Activated CD4-positive, alpha-beta memory T cell treated with anti-CD3 and anti-CD28 coated beads, Interleukin-2, amount 10 ng/mL, durations not matched to agents 7 days and 5 days (primary cell): ENCODE measurements at regions of chr3 and their contacts with region 1.

Region 1: GRCh38 chr3:119676771-119677640 is at the start of gene COX17:
- DNase-seq: peak; percentile 97
- H3K4me3 Mint-ChIP-seq: peak within 1 kb of the TSS; percentile 74
- H3K27ac Mint-ChIP-seq: peak within 1 kb of the TSS; percentile 92
- H3K4me1 Mint-ChIP-seq: peaks cover 29% of the 10 kb centered on the region
- H3K27me3 Mint-ChIP-seq: no peaks in the 10 kb centered on the region
- total RNA-seq, gene COX17: 63.7 to 69.8 TPM

Region 2: GRCh38 chr3:119279101-119279554 is 397.9 kb before region 1 on chr3:
- CTCF ChIA-PET with region 1: interaction called, 11 read pairs
- POLR2A ChIA-PET with region 1: no interaction called
- DNase-seq: no peak
- H3K4me3 Mint-ChIP-seq: no peak overlapping the region
- H3K27ac Mint-ChIP-seq: no peak overlapping the region
- H3K4me1 Mint-ChIP-seq: no peaks in the 10 kb centered on the region
- H3K27me3 Mint-ChIP-seq: peaks cover 5% of the 10 kb centered on the region

Region 3: DNA sequence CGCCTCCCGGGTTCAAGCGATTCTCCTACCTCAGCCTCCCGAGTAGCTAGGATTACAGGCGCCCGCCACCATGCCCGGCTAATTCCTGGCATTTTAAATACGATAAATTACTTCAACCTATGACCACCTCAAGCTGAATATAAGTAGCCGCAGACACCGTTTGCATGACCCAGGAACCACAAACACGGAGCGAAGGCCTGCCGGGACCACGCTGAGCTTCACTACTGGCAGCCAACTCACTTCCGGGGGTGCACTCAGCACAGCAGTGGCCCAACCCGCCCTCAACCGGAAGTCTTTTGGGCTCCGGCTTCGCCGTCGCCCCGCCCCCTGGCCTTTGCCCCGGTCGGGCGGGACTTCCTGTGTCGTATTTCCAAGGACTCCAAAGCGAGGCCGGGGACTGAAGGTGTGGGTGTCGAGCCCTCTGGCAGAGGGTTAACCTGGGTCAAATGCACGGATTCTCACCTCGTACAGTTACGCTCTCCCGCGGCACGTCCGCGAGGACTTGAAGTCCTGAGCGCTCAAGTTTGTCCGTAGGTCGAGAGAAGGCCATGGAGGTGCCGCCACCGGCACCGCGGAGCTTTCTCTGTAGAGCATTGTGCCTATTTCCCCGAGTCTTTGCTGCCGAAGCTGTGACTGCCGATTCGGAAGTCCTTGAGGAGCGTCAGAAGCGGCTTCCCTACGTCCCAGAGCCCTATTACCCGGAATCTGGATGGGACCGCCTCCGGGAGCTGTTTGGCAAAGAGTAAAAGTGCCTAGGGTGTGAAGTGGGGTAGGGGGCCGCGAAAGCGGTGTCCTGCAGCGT is 178.6 kb before region 1 on chr3 and contains the start of gene TIMMDC1:
- CTCF ChIA-PET with region 1: interaction called, 7 read pairs
- POLR2A ChIA-PET with region 1: interaction called, 29 read pairs
- DNase-seq: peak; percentile 98
- H3K4me3 Mint-ChIP-seq: peak within 1 kb of the TSS; percentile 99
- H3K27ac Mint-ChIP-seq: peak within 1 kb of the TSS; percentile 96
- H3K4me1 Mint-ChIP-seq: peaks cover 45% of the 10 kb centered on the region
- H3K27me3 Mint-ChIP-seq: no peaks in the 10 kb centered on the region
- total RNA-seq, gene TIMMDC1: 66.4 to 67.4 TPM

Region 4: GRCh38 chr3:119524931-119525662 is 151.9 kb before region 1 on chr3:
- CTCF ChIA-PET with region 1: no interaction called
- POLR2A ChIA-PET with region 1: no interaction called
- DNase-seq: no peak
- H3K4me3 Mint-ChIP-seq: no peak overlapping the region
- H3K27ac Mint-ChIP-seq: no peak overlapping the region
- H3K4me1 Mint-ChIP-seq: peaks cover 16% of the 10 kb centered on the region
- H3K27me3 Mint-ChIP-seq: no peaks in the 10 kb centered on the region

Region 5: GRCh38 chr3:119637679-119638525 is 39.1 kb before region 1 on chr3:
- CTCF ChIA-PET with region 1: interaction called, 3 read pairs
- POLR2A ChIA-PET with region 1: interaction called, 21 read pairs
- DNase-seq: no peak
- H3K4me3 Mint-ChIP-seq: no peak overlapping the region
- H3K27ac Mint-ChIP-seq: peak overlapping the region; percentile 95
- H3K4me1 Mint-ChIP-seq: peaks cover 48% of the 10 kb centered on the region
- H3K27me3 Mint-ChIP-seq: no peaks in the 10 kb centered on the region

Region 6: DNA sequence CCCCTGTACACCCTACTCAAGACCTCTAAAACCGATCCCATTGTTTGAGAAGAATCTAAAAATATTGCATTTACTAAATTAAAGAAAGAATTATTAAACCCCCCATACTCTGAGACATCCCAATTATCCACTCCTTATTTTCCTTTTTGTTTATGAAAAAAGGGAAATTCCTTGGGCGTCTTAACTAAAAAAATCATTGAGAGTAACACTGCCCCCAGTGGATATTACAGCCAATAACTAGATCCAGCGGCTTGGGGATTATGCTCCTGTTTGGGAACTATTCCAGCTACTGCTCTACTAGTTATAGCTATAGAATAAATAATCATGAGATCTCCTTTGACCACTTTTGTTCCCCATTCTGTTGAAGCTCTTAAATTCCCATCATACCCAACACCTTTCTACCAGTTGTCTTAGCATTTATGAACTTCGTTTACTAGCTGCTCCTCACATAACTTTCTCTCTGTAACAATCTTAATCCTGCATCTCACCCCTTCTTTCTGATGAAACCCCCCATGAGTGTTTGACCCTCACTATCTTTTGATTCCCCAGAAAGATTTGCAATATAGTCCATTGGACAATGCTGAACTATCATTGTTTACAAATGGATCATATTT is 13.1 kb after region 1 on chr3:
- CTCF ChIA-PET with region 1: interaction called, 21 read pairs
- POLR2A ChIA-PET with region 1: interaction called, 3 read pairs
- DNase-seq: no peak
- H3K4me3 Mint-ChIP-seq: no peak overlapping the region
- H3K27ac Mint-ChIP-seq: no peak overlapping the region
- H3K4me1 Mint-ChIP-seq: no peaks in the 10 kb centered on the region
- H3K27me3 Mint-ChIP-seq: peaks cover 10% of the 10 kb centered on the region

Region 7: DNA sequence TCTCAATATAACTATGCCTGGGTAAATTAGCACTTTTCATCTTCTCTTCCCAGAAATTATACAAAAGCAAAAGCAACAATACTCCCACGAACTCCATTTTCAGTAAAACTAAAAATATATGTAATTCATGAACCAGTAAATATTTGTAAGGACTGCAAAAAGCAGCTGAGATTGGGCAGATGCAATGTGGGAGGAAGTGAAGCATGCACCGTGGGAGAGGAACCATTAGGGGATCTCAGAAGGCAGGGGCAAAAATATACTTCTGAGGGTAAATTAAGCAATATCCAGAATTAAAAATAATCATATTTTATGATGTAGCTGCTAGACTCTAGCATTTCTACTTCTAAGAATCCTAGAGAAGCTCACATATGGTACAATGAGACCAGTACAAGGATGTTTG is 46.0 kb after region 1 on chr3:
- CTCF ChIA-PET with region 1: no interaction called
- POLR2A ChIA-PET with region 1: no interaction called
- DNase-seq: no peak
- H3K4me3 Mint-ChIP-seq: no peak overlapping the region
- H3K27ac Mint-ChIP-seq: no peak overlapping the region
- H3K4me1 Mint-ChIP-seq: no peaks in the 10 kb centered on the region
- H3K27me3 Mint-ChIP-seq: no peaks in the 10 kb centered on the region

Region 8: GRCh38 chr3:119741657-119742590 is 64.9 kb after region 1 on chr3:
- CTCF ChIA-PET with region 1: no interaction called
- POLR2A ChIA-PET with region 1: no interaction called
- DNase-seq: no peak
- H3K4me3 Mint-ChIP-seq: no peak overlapping the region
- H3K27ac Mint-ChIP-seq: no peak overlapping the region
- H3K4me1 Mint-ChIP-seq: no peaks in the 10 kb centered on the region
- H3K27me3 Mint-ChIP-seq: peaks cover 17% of the 10 kb centered on the region

Region 9: DNA sequence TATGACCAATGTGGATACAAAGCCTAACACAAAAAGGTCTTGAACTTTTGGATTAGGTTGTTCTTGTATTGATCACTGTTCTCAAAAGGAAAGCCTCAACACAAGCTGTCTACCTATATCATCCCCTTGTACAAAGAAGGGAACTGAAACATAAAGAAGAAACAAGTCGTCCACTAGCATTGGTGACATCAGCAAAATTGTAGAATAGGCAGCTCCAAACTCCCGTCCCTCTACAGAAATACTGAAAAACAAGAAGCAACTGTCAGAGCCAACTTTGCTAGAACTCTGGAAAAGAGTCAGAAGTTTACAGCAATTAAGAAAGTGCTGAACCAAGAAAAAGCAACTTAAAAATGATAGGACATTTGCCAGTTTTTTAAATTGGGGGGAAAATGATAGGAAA is 97.4 kb after region 1 on chr3:
- CTCF ChIA-PET with region 1: no interaction called
- POLR2A ChIA-PET with region 1: no interaction called
- DNase-seq: no peak
- H3K4me3 Mint-ChIP-seq: no peak overlapping the region
- H3K27ac Mint-ChIP-seq: no peak overlapping the region
- H3K4me1 Mint-ChIP-seq: no peaks in the 10 kb centered on the region
- H3K27me3 Mint-ChIP-seq: peaks cover 12% of the 10 kb centered on the region